BJ (cell line): ENCODE measurements at regions of chr3 and their contacts with region 1.

Region 1: DNA sequence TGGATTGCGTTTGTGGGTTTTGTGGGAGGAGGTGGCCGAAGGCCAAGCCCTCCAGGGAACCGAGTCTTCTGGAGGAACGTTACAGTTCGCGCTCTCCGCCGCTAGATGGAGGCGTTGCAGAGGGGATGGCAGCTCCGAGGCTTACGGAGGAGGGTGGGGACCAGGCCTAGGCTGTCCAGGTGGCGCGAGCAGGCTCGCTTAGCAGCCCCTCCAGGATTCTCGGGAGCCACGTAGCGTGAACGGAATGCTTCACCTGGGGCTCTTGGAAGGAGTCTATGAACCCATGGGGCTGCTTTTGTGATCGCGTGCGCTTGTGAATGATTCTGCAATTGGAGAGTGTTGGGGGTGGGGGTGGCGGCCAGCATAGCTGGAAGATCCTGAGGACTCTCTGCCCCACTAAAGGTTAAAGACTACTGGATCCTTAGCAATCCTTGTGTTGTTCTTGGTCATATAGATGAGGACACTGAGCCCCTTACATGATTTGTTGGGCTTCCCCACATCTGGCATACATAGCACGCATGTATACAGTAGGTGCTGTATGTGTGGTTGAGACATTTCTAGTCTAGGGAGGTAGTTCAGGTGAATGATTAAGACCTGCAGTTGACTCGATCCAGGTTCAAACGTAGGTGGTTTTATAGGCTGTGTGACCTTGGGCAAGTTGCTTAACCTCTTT is 25.7 kb downstream of the FAM3D start:
- DNase-seq: peak; percentile 23
- H3K4me3 ChIP-seq: no peak overlapping the region
- H3K27me3 ChIP-seq: no peaks in the 10 kb centered on the region
- CTCF ChIP-seq: peak; percentile 95

Region 2: GRCh38 chr3:57350271-57350670 is 1290.6 kb before region 1 on chr3:
- CTCF ChIA-PET with region 1: no interaction called
- POLR2A ChIA-PET with region 1: no interaction called
- DNase-seq: no peak
- H3K4me3 ChIP-seq: no peak overlapping the region
- H3K27me3 ChIP-seq: no peaks in the 10 kb centered on the region
- CTCF ChIP-seq: no peak

Region 3: GRCh38 chr3:58560771-58561311 is 80.0 kb before region 1 on chr3:
- CTCF ChIA-PET with region 1: interaction called, 25 read pairs
- POLR2A ChIA-PET with region 1: no interaction called
- DNase-seq: peak; percentile 97
- H3K4me3 ChIP-seq: no peak overlapping the region
- H3K27me3 ChIP-seq: no peaks in the 10 kb centered on the region
- CTCF ChIP-seq: peak; percentile 65

Region 4: DNA sequence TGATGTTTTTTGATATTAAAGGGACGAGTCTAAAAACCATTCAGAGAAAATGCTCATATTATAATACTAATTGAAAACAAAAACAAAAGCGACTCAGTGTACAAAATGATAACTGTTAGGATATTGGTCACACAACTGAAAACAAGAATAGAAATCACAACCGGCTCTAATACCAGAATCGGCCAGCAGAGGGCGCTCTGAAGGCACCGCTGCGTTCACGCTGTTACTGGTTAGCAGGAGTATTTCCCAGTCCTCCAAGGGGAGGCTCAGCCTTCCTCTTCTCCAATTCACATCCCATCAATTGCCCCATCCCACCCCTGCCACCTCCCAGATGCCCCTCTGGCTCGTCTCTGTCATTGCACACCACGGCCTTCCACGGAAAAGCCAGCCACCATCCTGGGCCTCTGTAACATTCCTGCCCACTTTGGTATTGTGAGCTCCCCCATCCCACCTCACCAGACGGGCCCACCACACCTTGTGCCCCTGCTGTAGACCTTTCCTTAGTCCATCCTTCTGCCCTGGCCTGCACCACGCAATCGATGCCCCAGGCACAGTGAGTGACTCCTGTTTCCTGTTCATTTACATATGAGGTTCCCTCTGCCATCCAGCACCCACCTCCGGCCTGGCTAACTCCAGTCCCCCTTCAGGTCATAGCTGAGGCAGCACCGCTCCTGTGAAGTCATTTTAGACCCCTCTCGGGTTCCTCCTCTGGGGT is 72.1 kb before region 1 on chr3:
- CTCF ChIA-PET with region 1: interaction called, 25 read pairs
- POLR2A ChIA-PET with region 1: no interaction called
- DNase-seq: no peak
- H3K4me3 ChIP-seq: no peak overlapping the region
- H3K27me3 ChIP-seq: no peaks in the 10 kb centered on the region
- CTCF ChIP-seq: peak; percentile 85

Region 5: GRCh38 chr3:58630076-58630709 is 10.6 kb before region 1 on chr3:
- CTCF ChIA-PET with region 1: interaction called, 72 read pairs
- POLR2A ChIA-PET with region 1: no interaction called
- DNase-seq: no peak
- H3K4me3 ChIP-seq: no peak overlapping the region
- H3K27me3 ChIP-seq: no peaks in the 10 kb centered on the region
- CTCF ChIP-seq: peak; percentile 86

Region 6: GRCh38 chr3:58659051-58659675 is 18.3 kb after region 1 on chr3:
- CTCF ChIA-PET with region 1: interaction called, 13 read pairs
- POLR2A ChIA-PET with region 1: no interaction called
- DNase-seq: no peak
- H3K4me3 ChIP-seq: no peak overlapping the region
- H3K27me3 ChIP-seq: peaks cover 4% of the 10 kb centered on the region
- CTCF ChIP-seq: peak; percentile 50